ENCODE measurements at regions of chr3 and their contacts with region 1.

Region 1: GRCh38 chr3:9946112-9947024 is 5.8 kb downstream of the PRRT3 start:
- DNase-seq: peak; percentile 93
- H3K4me3 Mint-ChIP-seq: peak overlapping the region; percentile 96
- H3K27ac Mint-ChIP-seq: peak overlapping the region; percentile 78
- H3K4me1 Mint-ChIP-seq: no peaks in the 10 kb centered on the region
- H3K27me3 Mint-ChIP-seq: no peaks in the 10 kb centered on the region
- CTCF ChIP-seq: peak; percentile 68

Region 2: GRCh38 chr3:9715764-9716437 is 230.5 kb before region 1 on chr3:
- CTCF ChIA-PET with region 1: interaction called, 10 read pairs
- intact Hi-C with region 1: no loop called
- DNase-seq: peak; percentile 77
- H3K4me3 Mint-ChIP-seq: no peak overlapping the region
- H3K27ac Mint-ChIP-seq: peak overlapping the region; percentile 25
- H3K4me1 Mint-ChIP-seq: peaks cover 15% of the 10 kb centered on the region
- H3K27me3 Mint-ChIP-seq: peaks cover 54% of the 10 kb centered on the region
- CTCF ChIP-seq: peak; percentile 51

Region 3: DNA sequence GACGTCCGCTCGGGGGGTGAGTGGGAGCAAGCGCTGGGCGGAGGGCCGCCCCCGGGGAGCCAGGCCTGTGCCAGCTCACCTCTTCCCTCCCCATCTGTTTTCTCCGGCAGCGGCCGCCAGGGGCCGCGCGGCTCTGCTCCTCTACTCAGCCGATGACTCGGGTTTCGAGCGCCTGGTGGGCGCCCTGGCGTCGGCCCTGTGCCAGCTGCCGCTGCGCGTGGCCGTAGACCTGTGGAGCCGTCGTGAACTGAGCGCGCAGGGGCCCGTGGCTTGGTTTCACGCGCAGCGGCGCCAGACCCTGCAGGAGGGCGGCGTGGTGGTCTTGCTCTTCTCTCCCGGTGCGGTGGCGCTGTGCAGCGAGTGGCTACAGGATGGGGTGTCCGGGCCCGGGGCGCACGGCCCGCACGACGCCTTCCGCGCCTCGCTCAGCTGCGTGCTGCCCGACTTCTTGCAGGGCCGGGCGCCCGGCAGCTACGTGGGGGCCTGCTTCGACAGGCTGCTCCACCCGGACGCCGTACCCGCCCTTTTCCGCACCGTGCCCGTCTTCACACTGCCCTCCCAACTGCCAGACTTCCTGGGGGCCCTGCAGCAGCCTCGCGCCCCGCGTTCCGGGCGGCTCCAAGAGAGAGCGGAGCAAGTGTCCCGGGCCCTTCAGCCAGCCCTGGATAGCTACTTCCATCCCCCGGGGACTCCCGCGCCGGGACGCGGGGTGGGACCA is 13.4 kb before region 1 on chr3:
- CTCF ChIA-PET with region 1: interaction called, 20 read pairs
- intact Hi-C with region 1: no loop called
- DNase-seq: peak; percentile 84
- H3K4me3 Mint-ChIP-seq: peak overlapping the region; percentile 93
- H3K27ac Mint-ChIP-seq: peak overlapping the region; percentile 95
- H3K4me1 Mint-ChIP-seq: peaks cover 15% of the 10 kb centered on the region
- H3K27me3 Mint-ChIP-seq: no peaks in the 10 kb centered on the region
- CTCF ChIP-seq: peak; percentile 38

Region 4: GRCh38 chr3:9976721-9977709 is 30.6 kb after region 1 on chr3:
- CTCF ChIA-PET with region 1: no interaction called
- intact Hi-C with region 1: no loop called
- DNase-seq: peak; percentile 63
- H3K4me3 Mint-ChIP-seq: peak overlapping the region; percentile 19
- H3K27ac Mint-ChIP-seq: peak overlapping the region; percentile 83
- H3K4me1 Mint-ChIP-seq: peaks cover 13% of the 10 kb centered on the region
- H3K27me3 Mint-ChIP-seq: no peaks in the 10 kb centered on the region
- CTCF ChIP-seq: no peak